CD4-positive, alpha-beta T cell (primary cell): ENCODE measurements at regions of chr17 and their contacts with region 1.

Region 1: GRCh38 chr17:32519228-32520103 is 32.7 kb downstream of the CDK5R1 start:
- DNase-seq: peak in 13 of 14 experiments; percentile 60 to 87 (median 76)
- ATAC-seq: peak; percentile 49
- H3K4me3 ChIP-seq: peak overlapping the region; percentile 43
- H3K4me3 Mint-ChIP-seq: peak overlapping the region; percentile 83
- H3K27ac ChIP-seq: peak overlapping the region; percentile 84
- H3K27ac Mint-ChIP-seq: peak overlapping the region; percentile 87
- H3K4me1 ChIP-seq: peaks cover 65% of the 10 kb centered on the region
- H3K4me1 Mint-ChIP-seq: peaks cover 85% of the 10 kb centered on the region
- H3K27me3 ChIP-seq: no peaks in the 10 kb centered on the region
- H3K27me3 Mint-ChIP-seq: no peaks in the 10 kb centered on the region
- CTCF ChIP-seq: no peak

Region 2: DNA sequence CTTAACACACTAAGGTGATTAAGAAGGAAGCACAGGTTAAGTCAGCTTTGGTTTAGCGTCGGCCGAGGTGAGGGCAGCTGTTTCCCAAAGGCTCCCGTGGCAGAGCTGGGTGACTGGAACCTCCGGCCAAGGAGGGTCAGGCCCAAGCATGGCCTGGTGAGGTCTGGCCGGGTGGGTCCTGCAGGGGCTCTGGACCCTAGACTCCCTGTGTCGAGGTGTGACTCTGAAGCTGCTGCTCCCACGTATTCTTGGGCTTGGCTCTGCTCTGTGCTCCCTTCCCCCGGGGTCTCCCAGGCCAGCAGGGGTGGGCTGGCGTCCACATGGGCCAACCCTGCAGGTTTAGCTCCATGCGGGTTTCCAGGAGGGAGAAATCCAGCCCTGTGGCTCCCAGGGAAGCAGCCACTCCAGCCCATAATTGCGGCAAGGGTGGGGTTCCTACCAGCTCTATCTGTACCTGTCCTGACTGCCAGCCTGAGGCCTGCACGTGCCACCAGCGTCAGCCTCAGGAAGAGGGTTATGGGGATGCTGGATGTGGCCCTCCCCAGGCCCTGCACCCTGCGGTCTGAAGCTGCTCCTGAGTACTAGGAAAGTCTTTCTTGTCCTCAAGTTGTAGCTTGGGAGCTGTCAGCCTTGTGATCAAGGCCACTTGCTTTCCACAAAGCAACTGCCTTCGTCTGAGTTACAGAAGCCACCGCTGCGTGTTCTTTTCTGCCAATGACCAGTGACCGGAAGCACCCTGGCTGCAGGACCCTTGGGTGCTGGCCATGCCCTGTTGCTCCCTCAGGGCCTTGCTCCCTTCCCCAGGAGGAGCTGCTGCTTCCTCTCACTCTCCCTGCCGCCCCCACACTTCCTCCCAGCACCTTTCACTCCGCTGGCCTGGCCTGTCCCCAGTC is 27.8 kb before region 1 on chr17:
- CTCF ChIA-PET with region 1: interaction called, 12 read pairs
- POLR2A ChIA-PET with region 1: interaction called, 152 read pairs
- intact Hi-C with region 1: loop called in 1 of 2 experiments (anchors 2 kb)
- DNase-seq: peak in 4 of 14 experiments; percentile 12 to 54 (median 44)
- ATAC-seq: peak; percentile 9
- H3K4me3 ChIP-seq: peak overlapping the region; percentile 10
- H3K4me3 Mint-ChIP-seq: peak overlapping the region; percentile 89
- H3K27ac ChIP-seq: peak overlapping the region; percentile 47 to 63
- H3K27ac Mint-ChIP-seq: peak overlapping the region; percentile 95
- H3K4me1 ChIP-seq: peaks cover 88% of the 10 kb centered on the region
- H3K4me1 Mint-ChIP-seq: peaks cover 65% of the 10 kb centered on the region
- H3K27me3 ChIP-seq: no peaks in the 10 kb centered on the region
- H3K27me3 Mint-ChIP-seq: no peaks in the 10 kb centered on the region
- CTCF ChIP-seq: no peak

Region 3: DNA sequence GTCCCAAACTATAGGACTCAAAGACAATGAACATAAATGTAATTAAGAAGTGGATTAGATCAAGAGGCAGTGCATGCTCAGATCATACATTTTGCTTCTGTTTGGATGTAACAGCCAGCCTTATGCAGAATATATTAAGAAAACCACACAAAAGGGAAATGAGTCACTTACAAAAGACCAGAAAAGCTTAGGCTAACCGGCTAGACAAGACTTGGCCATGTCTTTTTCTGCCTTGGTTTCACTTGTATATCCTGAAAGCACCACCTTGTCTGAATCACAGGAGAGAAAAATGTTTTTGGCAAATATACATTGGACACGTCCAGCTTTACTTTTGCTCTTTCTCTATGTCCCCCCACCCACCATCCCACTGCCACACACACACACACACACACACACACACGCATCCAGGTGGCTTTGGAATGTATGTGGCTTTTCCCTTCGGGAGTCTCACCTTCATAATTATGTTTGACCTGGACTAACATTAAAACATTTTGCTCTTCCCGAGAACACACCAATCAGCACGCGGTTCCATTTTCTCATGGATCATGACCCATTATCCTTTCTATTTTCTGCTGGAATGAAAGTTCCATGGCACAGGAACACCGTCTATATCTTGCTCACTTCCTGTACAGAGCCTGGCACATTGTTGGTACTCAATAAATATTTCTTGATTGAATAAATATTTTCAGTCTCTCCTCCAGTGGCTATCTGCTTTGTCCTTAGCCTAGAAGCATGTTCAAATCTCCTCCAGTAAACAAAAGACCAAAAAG is 31.9 kb after region 1 on chr17:
- CTCF ChIA-PET with region 1: no interaction called
- POLR2A ChIA-PET with region 1: interaction called, 3 read pairs
- intact Hi-C with region 1: loop called in 1 of 2 experiments (anchors 5 kb)
- DNase-seq: peak in 3 of 14 experiments; percentile 30 to 40 (median 38)
- ATAC-seq: no peak
- H3K4me3 ChIP-seq: no peak overlapping the region
- H3K4me3 Mint-ChIP-seq: no peak overlapping the region
- H3K27ac ChIP-seq: no peak overlapping the region
- H3K27ac Mint-ChIP-seq: no peak overlapping the region
- H3K4me1 ChIP-seq: peaks cover 18% of the 10 kb centered on the region
- H3K4me1 Mint-ChIP-seq: peaks cover 35% of the 10 kb centered on the region
- H3K27me3 ChIP-seq: no peaks in the 10 kb centered on the region
- H3K27me3 Mint-ChIP-seq: no peaks in the 10 kb centered on the region
- CTCF ChIP-seq: no peak